ENCODE measurements at regions of chr12 and their contacts with region 1.

Region 1: GRCh38 chr12:122951979-122952892 is 14.0 kb downstream of the ABCB9 start:
- DNase-seq: no peak
- ATAC-seq: peak; percentile 97
- H3K4me3 ChIP-seq: no peak overlapping the region
- H3K27ac ChIP-seq: no peak overlapping the region
- H3K4me1 ChIP-seq: peaks cover 20% of the 10 kb centered on the region
- H3K27me3 ChIP-seq: no peaks in the 10 kb centered on the region
- CTCF ChIP-seq: peak; percentile 92 to 97 (median 95)
- EP300 ChIP-seq: no peak
- POLR2A ChIP-seq: no peak
- RAD21 ChIP-seq: peak; percentile 98

Region 2: DNA sequence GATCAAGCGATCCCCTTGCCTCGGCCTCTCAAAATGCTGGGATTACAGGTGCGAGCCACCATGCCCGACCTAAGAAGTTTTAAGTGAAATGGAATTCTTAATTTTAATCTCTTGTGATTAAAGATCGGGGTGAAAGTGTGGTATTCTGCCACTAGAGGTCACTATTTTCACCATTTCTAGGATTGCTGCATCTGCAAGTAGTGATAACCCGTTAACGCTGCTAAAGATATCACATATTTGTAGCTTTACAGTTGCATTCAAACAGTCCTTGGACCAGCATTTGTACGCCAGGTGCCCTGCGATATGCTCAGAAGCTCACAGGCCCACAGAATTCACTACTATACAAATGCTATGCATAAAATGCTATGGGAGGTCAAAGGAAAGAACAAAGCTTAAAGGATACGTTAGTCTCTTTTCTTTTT is 158.5 kb before region 1 on chr12:
- CTCF ChIA-PET with region 1: interaction called, 46 read pairs
- POLR2A ChIA-PET with region 1: no interaction called
- RAD21 ChIA-PET with region 1: interaction called, 4 read pairs
- SMC1A ChIA-PET with region 1: interaction called, 30 read pairs
- in situ Hi-C with region 1: loop called (anchors 5 kb)
- intact Hi-C with region 1: loop called (anchors 1 kb)
- DNase-seq: no peak
- ATAC-seq: peak; percentile 88
- H3K4me3 ChIP-seq: no peak overlapping the region
- H3K27ac ChIP-seq: no peak overlapping the region
- H3K4me1 ChIP-seq: no peaks in the 10 kb centered on the region
- H3K27me3 ChIP-seq: no peaks in the 10 kb centered on the region
- CTCF ChIP-seq: peak; percentile 53 to 67 (median 64); a peak in 5 of 6 replicates
- EP300 ChIP-seq: no peak
- POLR2A ChIP-seq: no peak
- RAD21 ChIP-seq: peak; percentile 74

Region 3: DNA sequence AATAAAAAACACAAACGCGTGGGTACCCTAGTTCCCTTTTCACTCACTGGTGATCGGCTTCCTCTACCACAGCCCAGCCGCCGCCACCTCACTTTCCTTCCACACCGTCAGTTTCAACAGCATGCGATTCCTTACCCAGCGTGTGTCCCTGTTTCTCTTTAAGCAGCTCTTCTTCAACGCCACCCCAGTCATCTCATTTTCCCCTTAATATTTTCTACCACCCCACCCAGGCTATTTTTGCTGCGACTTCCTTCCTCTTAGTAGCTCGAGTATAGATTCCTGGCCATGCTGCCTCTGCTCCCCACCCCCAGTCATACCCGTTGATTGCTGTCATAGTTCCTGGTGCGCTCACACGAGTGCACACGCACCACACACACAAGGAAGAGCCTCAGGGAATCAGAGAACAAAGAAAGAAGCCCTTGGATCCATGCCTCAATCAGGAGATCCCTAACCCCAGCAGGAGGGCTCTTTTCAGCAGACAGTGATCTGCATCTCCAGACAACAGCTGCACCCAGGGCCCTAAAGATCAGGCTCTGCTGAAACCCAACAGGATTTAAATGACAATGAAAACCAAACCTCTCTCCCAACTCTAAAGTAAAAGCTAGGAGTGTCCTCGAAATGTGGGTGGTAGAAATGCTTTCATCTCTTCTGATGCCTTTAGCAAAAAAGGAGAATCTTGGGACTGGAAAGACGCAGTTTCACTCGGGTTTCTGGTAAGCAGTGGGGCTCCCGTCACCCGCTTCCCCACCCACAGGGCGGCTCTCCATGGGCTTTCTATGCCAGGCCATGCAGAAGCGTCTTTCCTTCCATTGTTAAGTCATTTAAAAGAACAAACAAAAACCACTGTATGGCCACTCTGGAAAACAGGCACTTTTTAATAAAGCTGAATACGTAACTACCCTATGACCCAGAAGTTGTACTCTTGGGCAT is 80.1 kb before region 1 on chr12:
- CTCF ChIA-PET with region 1: interaction called, 20 read pairs
- POLR2A ChIA-PET with region 1: interaction called, 7 read pairs
- RAD21 ChIA-PET with region 1: interaction called, 4 read pairs
- SMC1A ChIA-PET with region 1: interaction called, 12 read pairs
- in situ Hi-C with region 1: no loop called
- intact Hi-C with region 1: no loop called
- DNase-seq: peak; percentile 52
- ATAC-seq: peak; percentile 52
- H3K4me3 ChIP-seq: peak overlapping the region; percentile 57; the same call in 1 of the 2 replicates
- H3K27ac ChIP-seq: peak overlapping the region; percentile 64
- H3K4me1 ChIP-seq: peaks cover 45% of the 10 kb centered on the region
- H3K27me3 ChIP-seq: no peaks in the 10 kb centered on the region
- CTCF ChIP-seq: no peak
- EP300 ChIP-seq: no peak
- POLR2A ChIP-seq: 0 out of 2 replicates have a peak, but pooled peaks have one; percentile 17
- RAD21 ChIP-seq: no peak

Region 4: DNA sequence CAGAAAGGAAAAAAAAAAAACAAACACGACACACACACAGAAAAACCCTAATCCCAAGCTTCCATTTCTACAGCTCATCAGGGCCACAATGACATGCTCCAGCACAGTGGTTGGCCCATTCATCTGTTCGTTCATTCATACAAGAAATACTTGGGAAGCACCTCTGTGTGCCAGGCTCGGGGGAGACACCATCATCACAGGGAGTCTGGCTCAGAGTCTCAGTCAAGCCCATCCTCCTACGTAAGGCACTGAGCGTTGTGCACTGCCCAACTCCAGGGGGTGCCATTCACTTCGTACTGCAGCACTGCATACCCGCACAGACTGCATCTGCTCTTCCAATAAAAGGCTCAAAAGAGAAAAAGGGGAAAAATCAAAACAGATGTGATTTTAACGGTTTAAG is 71.6 kb before region 1 on chr12:
- CTCF ChIA-PET with region 1: interaction called, 14 read pairs
- POLR2A ChIA-PET with region 1: no interaction called
- RAD21 ChIA-PET with region 1: interaction called, 4 read pairs
- SMC1A ChIA-PET with region 1: interaction called, 18 read pairs
- in situ Hi-C with region 1: no loop called
- intact Hi-C with region 1: no loop called
- DNase-seq: no peak
- ATAC-seq: peak; percentile 60
- H3K4me3 ChIP-seq: no peak overlapping the region
- H3K27ac ChIP-seq: no peak overlapping the region
- H3K4me1 ChIP-seq: peaks cover 25% of the 10 kb centered on the region
- H3K27me3 ChIP-seq: no peaks in the 10 kb centered on the region; a peak in 1 of 4 replicates
- CTCF ChIP-seq: peak; percentile 43; a peak in 5 of 6 replicates
- EP300 ChIP-seq: no peak
- POLR2A ChIP-seq: no peak
- RAD21 ChIP-seq: peak; percentile 52

Region 5: DNA sequence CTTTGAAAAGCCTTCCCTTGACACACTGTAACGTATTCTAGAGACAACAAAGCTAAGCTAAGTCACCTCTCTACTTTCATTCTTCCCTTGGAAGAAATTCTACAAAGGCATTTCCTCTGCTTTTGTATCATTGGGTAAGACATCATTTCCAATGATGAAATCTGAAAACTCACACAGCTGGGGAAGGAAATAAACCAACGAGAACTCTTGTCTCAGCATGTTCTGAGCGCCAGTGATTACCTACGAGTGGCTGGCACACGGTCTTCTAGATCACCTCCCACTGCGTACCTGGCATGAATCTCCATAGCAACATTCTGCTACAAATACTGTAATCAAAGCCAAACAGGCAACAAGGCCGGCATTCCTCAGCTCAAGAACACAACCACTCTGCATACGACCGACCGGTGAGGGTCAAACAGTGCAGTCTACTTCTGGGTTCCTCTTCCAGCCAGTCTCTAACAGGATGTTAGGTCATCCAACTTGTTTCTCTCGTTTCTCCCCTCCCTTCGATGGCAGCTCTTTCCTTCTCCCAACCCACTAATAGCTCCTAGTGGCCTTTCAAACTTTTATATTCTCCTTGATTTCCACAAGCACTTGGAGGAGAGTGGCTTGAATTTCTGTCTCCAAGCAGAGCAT is 63.9 kb before region 1 on chr12:
- CTCF ChIA-PET with region 1: interaction called, 4 read pairs
- POLR2A ChIA-PET with region 1: interaction called, 3 read pairs
- RAD21 ChIA-PET with region 1: interaction called, 7 read pairs
- SMC1A ChIA-PET with region 1: interaction called, 18 read pairs
- in situ Hi-C with region 1: no loop called
- intact Hi-C with region 1: loop called (anchors 2 kb)
- DNase-seq: no peak
- ATAC-seq: peak; percentile 63
- H3K4me3 ChIP-seq: peak overlapping the region; percentile 51
- H3K27ac ChIP-seq: peak overlapping the region; percentile 71
- H3K4me1 ChIP-seq: peaks cover 36% of the 10 kb centered on the region
- H3K27me3 ChIP-seq: no peaks in the 10 kb centered on the region
- CTCF ChIP-seq: no peak
- EP300 ChIP-seq: no peak
- POLR2A ChIP-seq: peak; percentile 48
- RAD21 ChIP-seq: no peak

Region 6: DNA sequence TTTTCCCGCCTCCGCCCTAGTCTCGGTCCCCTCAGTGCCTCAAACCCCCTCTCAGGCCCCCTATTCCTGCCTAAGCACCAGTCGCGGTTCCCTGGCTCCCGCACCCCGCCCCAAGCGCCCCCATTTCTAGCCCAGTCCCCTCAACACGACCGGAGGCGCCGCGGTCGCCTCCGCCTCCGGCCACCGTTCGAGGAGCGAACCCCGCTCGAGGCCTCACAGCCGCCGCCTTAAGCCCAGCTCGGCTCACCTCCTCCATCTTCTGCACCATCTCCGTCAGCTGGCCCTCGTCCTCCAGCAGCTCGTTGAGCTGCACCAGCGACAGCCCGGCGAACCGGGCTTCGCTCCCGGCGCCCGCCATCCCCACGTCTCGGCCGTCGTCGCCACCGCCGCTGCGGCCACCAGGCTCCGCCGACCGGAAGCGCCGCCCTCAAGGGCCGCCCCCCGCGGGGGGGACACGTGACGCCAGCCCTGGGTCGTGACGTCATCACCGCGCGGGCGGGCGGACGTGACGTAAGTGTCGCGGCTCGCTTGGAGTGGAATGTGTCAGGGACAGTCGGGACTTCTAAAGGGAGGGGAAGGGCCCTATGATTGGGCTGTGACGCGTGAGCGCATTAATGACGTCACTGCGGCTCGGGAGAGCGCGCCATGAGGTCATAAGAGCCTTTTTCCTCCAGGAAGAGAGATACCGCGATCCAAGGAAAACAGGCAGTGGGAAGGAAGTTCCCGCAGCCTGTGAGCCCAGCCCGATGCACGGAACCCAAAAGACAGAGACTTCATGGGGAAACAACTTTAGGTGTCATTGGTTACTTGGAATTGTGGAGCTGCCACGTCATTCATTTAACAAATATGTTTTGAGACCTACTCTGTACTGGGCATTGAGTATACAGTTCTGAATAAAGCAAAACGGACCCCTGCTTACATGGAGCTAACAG is 56.3 kb before region 1 on chr12 and contains the start of gene VPS37B:
- CTCF ChIA-PET with region 1: interaction called, 12 read pairs
- POLR2A ChIA-PET with region 1: interaction called, 3 read pairs
- RAD21 ChIA-PET with region 1: interaction called, 4 read pairs
- SMC1A ChIA-PET with region 1: interaction called, 14 read pairs
- in situ Hi-C with region 1: no loop called
- intact Hi-C with region 1: loop called (anchors 2 kb)
- DNase-seq: no peak
- ATAC-seq: peak; percentile 38
- H3K4me3 ChIP-seq: peak within 1 kb of the TSS; percentile 69
- H3K27ac ChIP-seq: peak within 1 kb of the TSS; percentile 34
- H3K4me1 ChIP-seq: peaks cover 44% of the 10 kb centered on the region
- H3K27me3 ChIP-seq: no peaks in the 10 kb centered on the region
- CTCF ChIP-seq: no peak
- EP300 ChIP-seq: peak; percentile 45 to 57; a peak in 2 of 4 replicates
- POLR2A ChIP-seq: peak; percentile 93
- RAD21 ChIP-seq: no peak
- polyA plus RNA-seq, gene VPS37B: 0.66 to 1.7 TPM